Heart right ventricle (tissue), 16 donors: ENCODE measurements at regions of chr11 and their contacts with region 1.

Region 1: GRCh38 chr11:61028272-61028761 is 56.8 kb downstream of the CD6 start:
- DNase-seq: no peak
- ATAC-seq: no peak
- H3K4me3 ChIP-seq: no peak overlapping the region
- H3K27ac ChIP-seq: no peak overlapping the region
- H3K4me1 ChIP-seq: peaks cover 0 to 35% (median 18%) of the 10 kb centered on the region in 9 donors
- H3K27me3 ChIP-seq: peaks cover 0 to 1% (median 0%) of the 10 kb centered on the region in 7 donors
- CTCF ChIP-seq: no peak

Region 2: GRCh38 chr11:61039916-61040315 is 11.6 kb after region 1 on chr11:
- intact Hi-C with region 1: loop called in 1 of 10 experiments (anchors 1 kb)
- DNase-seq: no peak
- ATAC-seq: no peak
- H3K4me3 ChIP-seq: no peak overlapping the region
- H3K27ac ChIP-seq: no peak overlapping the region
- H3K4me1 ChIP-seq: peaks cover 0 to 29% (median 11%) of the 10 kb centered on the region in 9 donors
- H3K27me3 ChIP-seq: no peaks in the 10 kb centered on the region
- CTCF ChIP-seq: no peak

Region 3: GRCh38 chr11:61056571-61056970 is 28.3 kb after region 1 on chr11:
- intact Hi-C with region 1: no loop called
- DNase-seq: no peak
- ATAC-seq: no peak
- H3K4me3 ChIP-seq: no peak overlapping the region
- H3K27ac ChIP-seq: no peak overlapping the region
- H3K4me1 ChIP-seq: peaks cover 0 to 15% (median 0%) of the 10 kb centered on the region in 9 donors
- H3K27me3 ChIP-seq: no peaks in the 10 kb centered on the region
- CTCF ChIP-seq: no peak

Region 4: GRCh38 chr11:61129639-61130523 is 101.6 kb after region 1 on chr11:
- intact Hi-C with region 1: no loop called
- DNase-seq: peak; percentile 85 to 86
- ATAC-seq: peak; percentile 73 to 92 (median 88)
- H3K4me3 ChIP-seq: no peak overlapping the region
- H3K27ac ChIP-seq: peak overlapping the region in 3 of 10 donors; percentile 3 to 54 (median 32)
- H3K4me1 ChIP-seq: peaks cover 0 to 26% (median 13%) of the 10 kb centered on the region in 9 donors
- H3K27me3 ChIP-seq: no peaks in the 10 kb centered on the region
- CTCF ChIP-seq: peak; percentile 95 to 100 (median 99)